Psoas muscle (tissue), 8 donors: ENCODE measurements at regions of chr1 and their contacts with region 1.

Region 1: GRCh38 chr1:23585447-23586015 is 26.2 kb upstream of the ID3 start:
- DNase-seq: peak; percentile 69 to 72
- ATAC-seq: peak; percentile 83 to 92 (median 88)
- H3K4me3 ChIP-seq: no peak overlapping the region
- H3K27ac ChIP-seq: peak overlapping the region; percentile 61
- H3K4me1 ChIP-seq: peaks cover 19% of the 10 kb centered on the region
- H3K27me3 ChIP-seq: no peaks in the 10 kb centered on the region
- CTCF ChIP-seq: no peak

Region 2: GRCh38 chr1:23283660-23284602 is 301.6 kb before region 1 on chr1:
- intact Hi-C with region 1: no loop called
- DNase-seq: no peak
- ATAC-seq: no peak
- H3K4me3 ChIP-seq: no peak overlapping the region
- H3K27ac ChIP-seq: no peak overlapping the region
- H3K4me1 ChIP-seq: no peaks in the 10 kb centered on the region
- H3K27me3 ChIP-seq: no peaks in the 10 kb centered on the region
- CTCF ChIP-seq: no peak

Region 3: DNA sequence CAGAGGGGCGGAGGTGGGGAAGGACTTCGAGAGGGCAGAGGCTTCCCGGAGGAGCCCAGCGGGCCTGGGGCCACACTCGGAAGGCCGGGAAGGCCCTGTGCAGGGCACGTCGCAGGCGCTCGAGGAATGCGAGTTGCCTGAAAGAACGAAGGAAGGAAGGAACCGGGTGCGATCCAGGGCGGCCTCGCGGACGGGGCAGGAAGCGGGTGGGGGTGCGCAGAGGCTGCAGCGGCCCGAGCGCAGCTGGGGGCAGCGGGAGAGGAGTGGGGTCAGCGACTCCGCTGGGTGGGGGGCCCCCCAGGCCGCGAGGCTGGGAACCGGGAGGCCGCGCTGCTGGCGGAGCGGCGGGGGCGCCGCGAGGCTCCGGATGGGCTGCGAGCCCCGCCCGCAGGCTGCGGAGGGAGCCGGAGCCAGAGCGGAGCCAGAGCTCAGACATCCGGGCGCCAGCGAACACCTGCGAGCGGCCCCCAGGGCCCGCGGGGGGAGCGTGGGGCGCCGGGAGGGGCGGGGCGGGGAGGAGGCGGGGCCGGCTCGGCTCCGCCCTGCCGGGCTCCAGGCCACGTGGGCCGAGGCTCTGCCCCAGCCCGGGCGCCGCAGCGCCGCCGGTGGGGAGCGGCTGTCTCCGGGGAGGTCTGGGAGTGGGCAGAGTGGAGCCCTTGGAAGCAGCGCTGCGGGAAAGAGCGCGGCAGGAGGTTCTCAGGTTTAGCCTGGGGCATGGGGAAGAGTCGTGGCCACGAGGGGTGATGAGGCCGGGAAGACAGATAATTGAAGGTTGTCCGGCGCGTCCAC is 30.9 kb before region 1 on chr1:
- intact Hi-C with region 1: loop called in 1 of 2 experiments (anchors 5 kb)
- DNase-seq: peak; percentile 83 to 90
- ATAC-seq: peak; percentile 77 to 89 (median 84)
- H3K4me3 ChIP-seq: peak overlapping the region; percentile 74
- H3K27ac ChIP-seq: peak overlapping the region; percentile 79
- H3K4me1 ChIP-seq: peaks cover 20% of the 10 kb centered on the region
- H3K27me3 ChIP-seq: no peaks in the 10 kb centered on the region
- CTCF ChIP-seq: peak; percentile 39